Transverse colon (tissue), 4 donors: ENCODE measurements at regions of chr1 and their contacts with region 1.

Region 1: GRCh38 chr1:116485071-116485735 is 85.6 kb downstream of the CD58 start:
- DNase-seq: peak; percentile 92
- H3K4me3 ChIP-seq: no peak overlapping the region
- H3K27ac ChIP-seq: peak overlapping the region; percentile 77 to 82 (median 80)
- H3K4me1 ChIP-seq: peaks cover 0 to 71% (median 48%) of the 10 kb centered on the region in 4 donors
- H3K27me3 ChIP-seq: no peaks in the 10 kb centered on the region
- CTCF ChIP-seq: peak; percentile 86 to 97 (median 93)
- EP300 ChIP-seq: peak; percentile 45
- POLR2A ChIP-seq: peak; percentile 58

Region 2: GRCh38 chr1:115343200-115343737 is 1141.9 kb before region 1 on chr1:
- in situ Hi-C with region 1: no loop called
- intact Hi-C with region 1: no loop called
- DNase-seq: no peak
- H3K4me3 ChIP-seq: no peak overlapping the region
- H3K27ac ChIP-seq: no peak overlapping the region
- H3K4me1 ChIP-seq: peaks cover 0 to 2% (median under 1%) of the 10 kb centered on the region in 4 donors
- H3K27me3 ChIP-seq: peaks cover 22% of the 10 kb centered on the region
- CTCF ChIP-seq: no peak
- EP300 ChIP-seq: no peak
- POLR2A ChIP-seq: no peak

Region 3: GRCh38 chr1:115854005-115854404 is 631.2 kb before region 1 on chr1:
- in situ Hi-C with region 1: no loop called
- intact Hi-C with region 1: no loop called
- DNase-seq: no peak
- H3K4me3 ChIP-seq: no peak overlapping the region
- H3K27ac ChIP-seq: no peak overlapping the region
- H3K4me1 ChIP-seq: no peaks in the 10 kb centered on the region
- H3K27me3 ChIP-seq: peaks cover 16% of the 10 kb centered on the region
- CTCF ChIP-seq: no peak
- EP300 ChIP-seq: no peak
- POLR2A ChIP-seq: no peak

Region 4: GRCh38 chr1:116133696-116134650 is 351.2 kb before region 1 on chr1:
- in situ Hi-C with region 1: loop called in 3 of 4 experiments (anchors 10 to 25 kb)
- intact Hi-C with region 1: loop called (anchors 2 kb)
- DNase-seq: no peak
- H3K4me3 ChIP-seq: no peak overlapping the region
- H3K27ac ChIP-seq: no peak overlapping the region
- H3K4me1 ChIP-seq: peaks cover 0 to 2% (median 0%) of the 10 kb centered on the region in 4 donors
- H3K27me3 ChIP-seq: no peaks in the 10 kb centered on the region
- CTCF ChIP-seq: no peak
- EP300 ChIP-seq: no peak
- POLR2A ChIP-seq: no peak

Region 5: DNA sequence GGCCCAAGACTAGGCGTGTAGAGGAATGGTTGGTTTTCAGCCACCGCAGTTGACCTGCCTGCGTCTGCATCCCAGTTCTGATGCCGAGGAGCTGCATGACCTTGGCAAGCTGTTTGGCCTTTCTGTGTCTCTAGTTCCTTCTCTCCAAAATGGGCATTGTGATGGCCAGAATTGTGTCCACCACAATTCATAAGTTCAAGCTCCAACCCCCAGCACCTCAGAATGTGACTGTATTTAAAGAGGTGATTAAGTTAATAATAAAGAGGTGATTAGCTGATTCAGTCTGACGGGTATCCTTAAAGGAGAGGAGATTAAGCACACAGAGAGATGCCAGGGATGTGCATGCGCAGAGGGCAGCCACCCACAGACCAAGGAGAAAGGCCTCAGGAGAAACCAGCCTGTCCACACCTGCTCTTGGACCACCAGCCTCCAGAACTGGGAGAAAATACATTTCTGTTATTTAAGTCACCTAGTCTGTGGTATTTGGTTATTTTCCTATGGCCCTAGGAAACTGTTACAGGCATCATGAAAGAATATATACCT is 345.5 kb before region 1 on chr1:
- in situ Hi-C with region 1: loop called (anchors 10 to 25 kb)
- intact Hi-C with region 1: loop called (anchors 2 kb)
- DNase-seq: no peak
- H3K4me3 ChIP-seq: no peak overlapping the region
- H3K27ac ChIP-seq: no peak overlapping the region
- H3K4me1 ChIP-seq: peaks cover 0 to 5% (median 0%) of the 10 kb centered on the region in 4 donors
- H3K27me3 ChIP-seq: peaks cover 7% of the 10 kb centered on the region
- CTCF ChIP-seq: no peak
- EP300 ChIP-seq: no peak
- POLR2A ChIP-seq: no peak

Region 6: GRCh38 chr1:116151739-116152576 is 333.2 kb before region 1 on chr1:
- in situ Hi-C with region 1: loop called in 3 of 4 experiments (anchors 10 to 25 kb)
- intact Hi-C with region 1: loop called (anchors 5 kb)
- DNase-seq: peak; percentile 82
- H3K4me3 ChIP-seq: peak overlapping the region in 3 of 4 donors; percentile 26 to 54 (median 34)
- H3K27ac ChIP-seq: peak overlapping the region; percentile 76 to 87 (median 82)
- H3K4me1 ChIP-seq: peaks cover 3 to 37% (median 24%) of the 10 kb centered on the region in 4 donors
- H3K27me3 ChIP-seq: no peaks in the 10 kb centered on the region
- CTCF ChIP-seq: peak; percentile 84 to 96 (median 95)
- EP300 ChIP-seq: no peak
- POLR2A ChIP-seq: peak; percentile 32

Region 7: GRCh38 chr1:116361648-116362047 is 123.6 kb before region 1 on chr1:
- in situ Hi-C with region 1: loop called in 2 of 4 experiments (anchors 25 kb)
- intact Hi-C with region 1: loop called (anchors 1 kb)
- DNase-seq: no peak
- H3K4me3 ChIP-seq: no peak overlapping the region
- H3K27ac ChIP-seq: no peak overlapping the region
- H3K4me1 ChIP-seq: peaks cover 0 to 21% (median 3%) of the 10 kb centered on the region in 4 donors
- H3K27me3 ChIP-seq: no peaks in the 10 kb centered on the region
- CTCF ChIP-seq: no peak
- EP300 ChIP-seq: no peak
- POLR2A ChIP-seq: no peak

Region 8: DNA sequence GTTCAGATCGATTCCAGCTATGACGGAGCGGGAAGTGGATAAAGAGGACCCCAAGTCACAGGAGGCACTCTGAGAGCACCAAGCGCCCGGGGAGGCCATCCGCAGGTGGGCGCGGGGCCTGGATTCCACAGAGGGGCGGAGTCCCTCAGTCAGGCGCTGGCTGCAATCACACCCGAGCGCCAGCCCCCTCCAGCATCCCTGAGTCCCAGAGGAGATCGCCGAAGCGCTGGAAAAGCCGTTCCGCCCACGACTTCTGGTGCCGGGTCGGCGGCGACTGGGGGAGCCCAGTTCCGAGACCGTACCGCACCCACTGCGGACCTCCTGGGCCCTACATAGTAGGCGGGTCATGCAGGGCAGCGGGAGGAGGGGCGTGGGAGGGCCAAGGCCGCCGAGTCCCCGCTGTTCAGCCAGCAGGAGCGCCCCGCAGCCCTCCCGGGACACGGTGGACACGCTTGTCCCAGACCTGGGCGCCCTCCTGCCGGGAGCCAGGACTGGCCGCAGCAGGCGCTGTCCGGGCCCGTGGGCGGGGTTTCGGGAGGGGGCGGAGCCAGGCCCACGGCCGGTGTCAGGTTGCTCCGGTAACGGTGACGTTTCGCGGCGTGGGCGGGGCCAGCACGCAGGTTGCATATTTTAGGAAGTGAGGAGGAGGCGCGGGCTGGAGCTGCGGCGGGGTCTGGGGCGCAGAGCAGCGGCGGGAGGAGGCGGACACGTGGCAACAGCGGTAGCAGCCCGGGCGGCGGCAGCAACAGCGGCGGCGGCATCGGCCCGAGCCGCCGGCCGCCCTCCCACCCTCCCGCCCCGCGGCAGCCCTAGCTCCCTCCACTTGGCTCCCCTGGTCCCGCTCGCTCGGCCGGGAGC is 112.4 kb before region 1 on chr1 and contains the start of gene ATP1A1:
- in situ Hi-C with region 1: loop called in 2 of 4 experiments (anchors 25 kb)
- intact Hi-C with region 1: no loop called
- DNase-seq: peak; percentile 99
- H3K4me3 ChIP-seq: peak within 1 kb of the TSS; percentile 95 to 99 (median 98)
- H3K27ac ChIP-seq: peak within 1 kb of the TSS; percentile 96 to 99 (median 98)
- H3K4me1 ChIP-seq: peaks cover 11 to 47% (median 43%) of the 10 kb centered on the region in 4 donors
- H3K27me3 ChIP-seq: no peaks in the 10 kb centered on the region
- CTCF ChIP-seq: peak in 1 of 5 experiments; percentile 42
- EP300 ChIP-seq: no peak
- POLR2A ChIP-seq: peak; percentile 95
- total RNA-seq, gene ATP1A1: 324 to 3,097 (median 1,990) TPM